Activated T-helper 2 cell treated with anti-CD3 and anti-CD28 coated beads, Interferon-gamma antibody, Interleukin-2, Interleukin-4, amounts not matched to agents 10 μg/mL and 5 μg/mL and 100 μg/mL, durations not matched to agents 14 hours and 24 hours and 36 hours (primary cell): ENCODE measurements at regions of chr9 and their contacts with region 1.

Region 1: GRCh38 chr9:3525836-3526164 is at the start of gene RFX3:
- DNase-seq: peak; percentile 85
- H3K4me3 Mint-ChIP-seq: peak within 1 kb of the TSS; percentile 93
- H3K27ac Mint-ChIP-seq: peak within 1 kb of the TSS; percentile 98
- H3K4me1 Mint-ChIP-seq: peaks cover 46% of the 10 kb centered on the region
- H3K27me3 Mint-ChIP-seq: no peaks in the 10 kb centered on the region
- total RNA-seq, gene RFX3: 11.3 and 11.9 TPM in 2 replicates

Region 2: DNA sequence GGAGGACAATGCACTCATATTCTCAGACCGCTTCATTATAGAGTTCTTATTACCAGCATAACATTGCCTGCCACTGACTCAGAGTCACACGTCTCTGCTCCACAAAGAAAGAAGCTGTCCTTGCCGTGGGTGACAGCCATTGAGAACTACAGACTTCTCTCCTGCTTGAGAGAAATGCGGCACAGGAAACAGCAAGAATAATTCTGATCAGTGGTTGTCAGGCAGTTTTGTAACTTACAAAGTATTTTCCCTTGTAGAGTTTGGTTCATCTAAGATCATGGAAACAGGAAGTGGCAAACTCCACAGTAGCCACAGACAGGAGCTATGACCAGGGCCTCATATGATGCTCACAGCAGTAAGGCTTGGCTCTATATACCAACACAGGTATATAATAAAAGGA is 761.4 kb before region 1 on chr9:
- intact Hi-C with region 1: loop called (anchors 10 kb)
- DNase-seq: peak; percentile 55
- H3K4me3 Mint-ChIP-seq: no peak overlapping the region
- H3K27ac Mint-ChIP-seq: peak overlapping the region; percentile 91
- H3K4me1 Mint-ChIP-seq: peaks cover 33% of the 10 kb centered on the region
- H3K27me3 Mint-ChIP-seq: no peaks in the 10 kb centered on the region

Region 3: GRCh38 chr9:3385871-3386270 is 139.9 kb before region 1 on chr9:
- intact Hi-C with region 1: loop called (anchors 2 kb)
- DNase-seq: peak; percentile 14
- H3K4me3 Mint-ChIP-seq: no peak overlapping the region
- H3K27ac Mint-ChIP-seq: no peak overlapping the region
- H3K4me1 Mint-ChIP-seq: peaks cover 23% of the 10 kb centered on the region
- H3K27me3 Mint-ChIP-seq: no peaks in the 10 kb centered on the region

Region 4: GRCh38 chr9:3578786-3579185 is 53.0 kb after region 1 on chr9:
- intact Hi-C with region 1: loop called (anchors 5 kb)
- DNase-seq: no peak
- H3K4me3 Mint-ChIP-seq: no peak overlapping the region
- H3K27ac Mint-ChIP-seq: no peak overlapping the region
- H3K4me1 Mint-ChIP-seq: peaks cover 8% of the 10 kb centered on the region
- H3K27me3 Mint-ChIP-seq: no peaks in the 10 kb centered on the region

Region 5: GRCh38 chr9:3906432-3907213 is 380.8 kb after region 1 on chr9:
- intact Hi-C with region 1: loop called (anchors 2 kb)
- DNase-seq: no peak
- H3K4me3 Mint-ChIP-seq: no peak overlapping the region
- H3K27ac Mint-ChIP-seq: no peak overlapping the region
- H3K4me1 Mint-ChIP-seq: peaks cover 71% of the 10 kb centered on the region
- H3K27me3 Mint-ChIP-seq: no peaks in the 10 kb centered on the region

Region 6: DNA sequence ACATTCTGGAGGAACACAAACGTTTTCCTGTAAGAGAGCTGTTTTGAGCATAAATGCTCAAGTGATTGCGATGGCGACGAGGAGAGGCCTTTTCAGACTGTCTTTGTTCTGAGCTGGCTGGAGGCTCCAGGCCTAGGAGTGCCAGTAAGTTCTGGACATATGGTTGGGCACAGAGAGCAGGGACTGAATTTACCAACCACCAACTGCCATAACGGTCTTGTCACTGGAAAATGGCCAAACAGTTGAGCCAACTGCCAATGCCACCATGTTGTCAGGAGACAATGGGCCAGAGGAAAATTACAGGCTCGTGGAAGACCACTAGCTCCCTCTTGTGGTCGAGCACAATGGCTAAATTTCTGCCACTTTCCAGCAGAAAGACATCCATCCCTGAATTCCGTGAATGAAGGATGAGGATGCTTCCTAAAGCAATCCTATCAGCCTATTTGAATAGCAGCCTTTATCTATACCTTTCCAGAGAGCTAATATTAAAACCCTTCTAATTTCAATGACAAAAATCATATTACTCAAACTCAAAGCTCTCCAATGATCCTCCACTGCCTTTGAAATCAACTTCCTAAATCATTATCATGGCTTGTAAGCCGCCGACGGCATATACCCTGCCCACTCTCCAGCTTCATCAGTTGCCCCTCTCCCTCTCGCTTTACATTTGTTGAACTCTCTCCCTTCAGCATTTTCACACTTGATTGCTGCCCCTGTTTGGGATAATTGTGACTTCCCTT is 841.0 kb after region 1 on chr9:
- intact Hi-C with region 1: loop called (anchors 1 kb)
- DNase-seq: no peak
- H3K4me3 Mint-ChIP-seq: no peak overlapping the region
- H3K27ac Mint-ChIP-seq: no peak overlapping the region
- H3K4me1 Mint-ChIP-seq: peaks cover 9% of the 10 kb centered on the region
- H3K27me3 Mint-ChIP-seq: peaks cover 6% of the 10 kb centered on the region